A673 (cell line): ENCODE measurements at regions of chr19 and their contacts with region 1.

Region 1: GRCh38 chr19:33397536-33398360 is 24.2 kb downstream of the CEBPG start:
- DNase-seq: no peak
- H3K4me3 ChIP-seq: no peak overlapping the region
- H3K27ac ChIP-seq: no peak overlapping the region
- H3K4me1 ChIP-seq: no peaks in the 10 kb centered on the region
- H3K27me3 ChIP-seq: no peaks in the 10 kb centered on the region
- CTCF ChIP-seq: no peak

Region 2: DNA sequence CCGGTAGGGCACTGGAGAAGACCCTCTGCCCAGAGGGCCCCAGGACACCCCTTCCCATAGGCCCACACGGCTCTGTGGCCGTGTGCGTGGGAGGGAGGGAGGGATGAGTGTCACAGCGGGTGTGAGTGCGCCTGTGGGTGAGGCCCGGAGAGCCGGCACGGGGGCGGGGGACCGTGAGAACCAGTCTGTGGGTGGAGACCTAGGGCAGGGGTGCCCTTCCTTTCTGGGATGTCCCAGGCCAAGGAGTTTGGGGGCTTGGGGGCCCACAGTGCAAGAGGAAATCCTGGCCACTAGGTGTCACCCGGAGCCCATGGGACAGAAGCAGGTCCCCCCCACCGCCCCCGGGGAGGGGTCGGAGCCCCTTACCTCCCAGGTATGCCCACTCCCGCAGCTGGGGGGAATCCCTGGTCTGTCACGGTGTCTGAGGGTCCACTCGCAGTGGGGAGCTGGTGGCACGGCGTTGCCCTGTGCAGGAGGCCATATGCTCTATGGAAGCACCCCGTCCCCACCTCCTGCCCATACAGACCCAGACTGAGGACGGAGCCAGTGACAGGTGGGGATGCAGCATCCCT is 156.1 kb before region 1 on chr19:
- CTCF ChIA-PET with region 1: interaction called, 10 read pairs
- POLR2A ChIA-PET with region 1: no interaction called
- intact Hi-C with region 1: no loop called
- DNase-seq: no peak
- H3K4me3 ChIP-seq: no peak overlapping the region
- H3K27ac ChIP-seq: no peak overlapping the region
- H3K4me1 ChIP-seq: no peaks in the 10 kb centered on the region
- H3K27me3 ChIP-seq: no peaks in the 10 kb centered on the region
- CTCF ChIP-seq: peak; percentile 76

Region 3: DNA sequence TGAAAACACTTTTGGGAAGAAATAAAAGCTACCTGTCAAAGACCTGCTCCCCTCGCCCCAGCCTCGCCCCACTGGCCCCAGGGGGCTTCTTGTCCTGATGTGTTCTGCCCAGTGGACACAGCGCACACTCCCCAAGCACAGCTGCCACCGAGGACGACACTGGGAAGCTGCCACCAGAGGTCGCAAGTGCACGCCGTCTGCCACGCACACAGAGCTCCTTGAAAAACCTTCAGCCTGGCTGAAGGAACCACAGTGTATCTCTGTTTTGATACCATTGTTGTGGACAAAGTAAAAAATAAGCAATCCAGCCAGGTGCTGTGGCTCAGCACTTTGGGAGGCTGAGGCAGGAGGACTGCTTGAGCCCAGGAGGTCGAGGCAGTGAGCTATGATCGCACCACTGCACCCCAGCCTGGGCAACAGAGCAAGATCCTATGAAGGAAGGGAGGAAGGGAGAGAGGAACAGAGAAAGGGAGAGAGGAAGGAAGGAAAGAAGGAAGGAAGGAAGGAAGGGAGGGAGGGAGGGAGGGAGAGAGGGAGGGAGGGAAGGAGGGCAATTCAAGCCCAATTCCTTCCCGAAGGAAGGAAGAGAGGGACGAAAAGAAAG is 33.0 kb after region 1 on chr19:
- CTCF ChIA-PET with region 1: interaction called, 13 read pairs
- POLR2A ChIA-PET with region 1: no interaction called
- intact Hi-C with region 1: no loop called
- DNase-seq: peak; percentile 81
- H3K4me3 ChIP-seq: no peak overlapping the region
- H3K27ac ChIP-seq: no peak overlapping the region
- H3K4me1 ChIP-seq: peaks cover 16% of the 10 kb centered on the region
- H3K27me3 ChIP-seq: no peaks in the 10 kb centered on the region
- CTCF ChIP-seq: peak; percentile 94

Region 4: GRCh38 chr19:33501693-33502356 is 104.1 kb after region 1 on chr19:
- CTCF ChIA-PET with region 1: no interaction called
- POLR2A ChIA-PET with region 1: no interaction called
- intact Hi-C with region 1: no loop called
- DNase-seq: peak; percentile 33
- H3K4me3 ChIP-seq: no peak overlapping the region
- H3K27ac ChIP-seq: peak overlapping the region; percentile 21
- H3K4me1 ChIP-seq: peaks cover 4% of the 10 kb centered on the region
- H3K27me3 ChIP-seq: no peaks in the 10 kb centered on the region
- CTCF ChIP-seq: no peak